Caco-2 (cell line): ENCODE measurements at regions of chr2 and their contacts with region 1.

Region 1: DNA sequence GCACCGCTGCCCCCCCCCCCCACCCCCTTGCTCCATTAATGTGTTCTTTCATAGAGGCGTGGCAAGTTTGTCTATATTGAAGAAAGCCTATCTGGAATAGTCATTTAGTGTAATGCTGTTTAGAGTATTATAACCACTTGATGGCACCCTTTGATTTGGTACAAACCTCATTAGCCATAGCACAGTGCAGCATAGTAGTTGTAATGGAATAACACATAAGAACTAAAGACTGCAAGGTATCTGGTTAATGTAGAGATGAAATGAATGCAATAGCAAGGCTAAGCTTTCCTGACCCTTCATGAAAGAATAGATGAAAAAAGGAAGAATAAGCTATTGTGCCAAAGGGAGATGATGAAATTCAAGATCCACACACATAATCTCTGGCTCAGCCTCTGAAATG is 81.9 kb downstream of the EHBP1 start:
- DNase-seq: peak in 1 of 2 experiments; percentile 27
- H3K4me3 ChIP-seq: no peak overlapping the region
- H3K4me3 Mint-ChIP-seq: no peak overlapping the region
- H3K27ac Mint-ChIP-seq: no peak overlapping the region
- H3K4me1 ChIP-seq: no peaks in the 10 kb centered on the region; the same call in 1 of the 2 replicates
- H3K4me1 Mint-ChIP-seq: peaks cover 20% of the 10 kb centered on the region
- H3K27me3 ChIP-seq: no peaks in the 10 kb centered on the region
- H3K27me3 Mint-ChIP-seq: no peaks in the 10 kb centered on the region
- CTCF ChIP-seq: peak in 1 of 2 experiments; percentile 14

Region 2: GRCh38 chr2:62999905-63000304 is 212.5 kb after region 1 on chr2:
- CTCF ChIA-PET with region 1: no interaction called
- POLR2A ChIA-PET with region 1: no interaction called
- intact Hi-C with region 1: loop called (anchors 10 kb)
- DNase-seq: no peak
- H3K4me3 ChIP-seq: no peak overlapping the region
- H3K4me3 Mint-ChIP-seq: no peak overlapping the region
- H3K27ac Mint-ChIP-seq: no peak overlapping the region
- H3K4me1 ChIP-seq: no peaks in the 10 kb centered on the region
- H3K4me1 Mint-ChIP-seq: no peaks in the 10 kb centered on the region
- H3K27me3 ChIP-seq: no peaks in the 10 kb centered on the region
- H3K27me3 Mint-ChIP-seq: no peaks in the 10 kb centered on the region
- CTCF ChIP-seq: no peak

Region 3: GRCh38 chr2:63424329-63425078 is 637.1 kb after region 1 on chr2:
- CTCF ChIA-PET with region 1: no interaction called
- POLR2A ChIA-PET with region 1: no interaction called
- intact Hi-C with region 1: loop called (anchors 10 kb)
- DNase-seq: peak in 1 of 2 experiments; percentile 28
- H3K4me3 ChIP-seq: no peak overlapping the region
- H3K4me3 Mint-ChIP-seq: no peak overlapping the region
- H3K27ac Mint-ChIP-seq: no peak overlapping the region
- H3K4me1 ChIP-seq: no peaks in the 10 kb centered on the region
- H3K4me1 Mint-ChIP-seq: no peaks in the 10 kb centered on the region
- H3K27me3 ChIP-seq: no peaks in the 10 kb centered on the region
- H3K27me3 Mint-ChIP-seq: no peaks in the 10 kb centered on the region
- CTCF ChIP-seq: peak; percentile 39 to 50